ENCODE measurements at regions of chr2 and their contacts with region 1.

Region 1: GRCh38 chr2:9813312-9814133 is 29.8 kb upstream of the TAF1B start:
- DNase-seq: no peak
- ATAC-seq: peak; percentile 91
- H3K4me3 ChIP-seq: peak overlapping the region in 1 of 2 experiments; percentile 23; a peak in 2 of 4 replicates
- H3K27ac ChIP-seq: no peak overlapping the region
- H3K4me1 ChIP-seq: no peaks in the 10 kb centered on the region
- H3K27me3 ChIP-seq: no peaks in the 10 kb centered on the region
- CTCF ChIP-seq: peak; percentile 98

Region 2: GRCh38 chr2:9060819-9061218 is 752.7 kb before region 1 on chr2:
- CTCF ChIA-PET with region 1: no interaction called
- POLR2A ChIA-PET with region 1: no interaction called
- in situ Hi-C with region 1: no loop called
- intact Hi-C with region 1: no loop called
- DNase-seq: no peak
- ATAC-seq: no peak
- H3K4me3 ChIP-seq: no peak overlapping the region
- H3K27ac ChIP-seq: no peak overlapping the region
- H3K4me1 ChIP-seq: no peaks in the 10 kb centered on the region
- H3K27me3 ChIP-seq: no peaks in the 10 kb centered on the region
- CTCF ChIP-seq: no peak

Region 3: GRCh38 chr2:9799665-9800632 is 13.6 kb before region 1 on chr2:
- CTCF ChIA-PET with region 1: interaction called, 4 read pairs
- POLR2A ChIA-PET with region 1: interaction called, 11 read pairs
- in situ Hi-C with region 1: no loop called
- intact Hi-C with region 1: no loop called
- DNase-seq: peak; percentile 79
- ATAC-seq: peak; percentile 88
- H3K4me3 ChIP-seq: peak overlapping the region in 1 of 2 experiments; percentile 10; a peak in 1 of 4 replicates
- H3K27ac ChIP-seq: 0 out of 2 replicates have a peak overlapping the region, but pooled peaks have one; percentile 37
- H3K4me1 ChIP-seq: peaks cover 36% of the 10 kb centered on the region
- H3K27me3 ChIP-seq: no peaks in the 10 kb centered on the region
- CTCF ChIP-seq: peak; percentile 99